ENCODE measurements at regions of chr18 and their contacts with region 1.

Region 1: GRCh38 chr18:3245853-3246634 is 1.6 kb upstream of the MYL12A start:
- DNase-seq: peak; percentile 95
- H3K4me3 ChIP-seq: peak overlapping the region; percentile 98 to 100 (median 99)
- H3K27ac ChIP-seq: peak overlapping the region; percentile 100
- H3K4me1 ChIP-seq: peaks cover 0 to 34% (median 25%) of the 10 kb centered on the region in 4 donors
- H3K27me3 ChIP-seq: no peaks in the 10 kb centered on the region
- CTCF ChIP-seq: peak; percentile 86 to 95 (median 93)
- EP300 ChIP-seq: no peak
- POLR2A ChIP-seq: no peak

Region 2: GRCh38 chr18:2932247-2933181 is 313.5 kb before region 1 on chr18:
- intact Hi-C with region 1: loop called (anchors 5 kb)
- DNase-seq: no peak
- H3K4me3 ChIP-seq: no peak overlapping the region
- H3K27ac ChIP-seq: no peak overlapping the region
- H3K4me1 ChIP-seq: peaks cover 0 to 12% (median 5%) of the 10 kb centered on the region in 4 donors
- H3K27me3 ChIP-seq: no peaks in the 10 kb centered on the region
- CTCF ChIP-seq: peak; percentile 57 to 79 (median 58)
- EP300 ChIP-seq: no peak
- POLR2A ChIP-seq: no peak

Region 3: GRCh38 chr18:2985628-2986027 is 260.4 kb before region 1 on chr18:
- intact Hi-C with region 1: no loop called
- DNase-seq: no peak
- H3K4me3 ChIP-seq: no peak overlapping the region
- H3K27ac ChIP-seq: no peak overlapping the region
- H3K4me1 ChIP-seq: peaks cover 0 to 34% (median 31%) of the 10 kb centered on the region in 4 donors
- H3K27me3 ChIP-seq: no peaks in the 10 kb centered on the region
- CTCF ChIP-seq: peak in 3 of 4 experiments; percentile 23 to 42 (median 34)
- EP300 ChIP-seq: no peak
- POLR2A ChIP-seq: no peak

Region 4: DNA sequence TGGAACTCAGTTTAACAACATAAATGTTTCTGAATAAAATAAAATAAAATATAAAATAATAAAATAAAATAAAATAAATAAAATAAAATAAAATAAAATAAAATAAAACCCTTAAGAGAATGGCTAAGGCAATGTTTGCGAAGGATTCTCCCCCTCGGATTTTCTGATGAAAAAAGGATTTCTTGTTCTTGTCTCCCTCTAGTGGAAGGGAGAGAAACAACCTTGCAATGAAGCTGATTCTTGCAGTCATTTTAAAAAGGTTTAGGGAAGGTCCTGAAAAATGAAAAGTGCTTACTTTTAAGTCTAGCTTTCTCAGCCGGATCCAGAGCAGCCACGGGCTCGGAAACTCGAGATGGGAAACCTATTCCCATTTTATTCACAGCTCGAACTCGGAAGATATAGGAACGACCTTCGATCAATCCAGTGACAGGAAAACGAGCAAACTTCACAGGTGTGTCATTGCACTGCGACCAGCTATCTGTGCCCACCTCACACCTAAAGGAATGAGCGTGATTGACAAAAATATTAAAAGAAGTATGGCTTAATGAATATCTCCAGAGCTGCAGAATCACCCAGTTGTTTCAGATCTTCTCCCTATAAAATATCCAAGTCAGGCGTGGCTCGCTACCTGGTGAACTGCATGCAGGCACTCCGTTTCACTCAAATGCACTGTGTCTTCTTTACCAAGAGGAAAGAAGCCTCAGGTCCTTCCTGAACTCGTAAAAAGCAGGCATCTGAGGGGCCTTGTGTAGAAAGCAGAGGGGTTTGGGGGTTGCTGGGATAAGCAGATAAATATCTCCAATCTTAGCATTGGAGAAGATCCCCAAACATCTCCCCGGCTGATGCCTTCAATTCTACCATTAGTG is 94.4 kb before region 1 on chr18:
- intact Hi-C with region 1: loop called (anchors 2 kb)
- DNase-seq: no peak
- H3K4me3 ChIP-seq: no peak overlapping the region
- H3K27ac ChIP-seq: no peak overlapping the region
- H3K4me1 ChIP-seq: no peaks in the 10 kb centered on the region
- H3K27me3 ChIP-seq: no peaks in the 10 kb centered on the region
- CTCF ChIP-seq: peak in 3 of 4 experiments; percentile 51 to 79 (median 54)
- EP300 ChIP-seq: no peak
- POLR2A ChIP-seq: no peak

Region 5: DNA sequence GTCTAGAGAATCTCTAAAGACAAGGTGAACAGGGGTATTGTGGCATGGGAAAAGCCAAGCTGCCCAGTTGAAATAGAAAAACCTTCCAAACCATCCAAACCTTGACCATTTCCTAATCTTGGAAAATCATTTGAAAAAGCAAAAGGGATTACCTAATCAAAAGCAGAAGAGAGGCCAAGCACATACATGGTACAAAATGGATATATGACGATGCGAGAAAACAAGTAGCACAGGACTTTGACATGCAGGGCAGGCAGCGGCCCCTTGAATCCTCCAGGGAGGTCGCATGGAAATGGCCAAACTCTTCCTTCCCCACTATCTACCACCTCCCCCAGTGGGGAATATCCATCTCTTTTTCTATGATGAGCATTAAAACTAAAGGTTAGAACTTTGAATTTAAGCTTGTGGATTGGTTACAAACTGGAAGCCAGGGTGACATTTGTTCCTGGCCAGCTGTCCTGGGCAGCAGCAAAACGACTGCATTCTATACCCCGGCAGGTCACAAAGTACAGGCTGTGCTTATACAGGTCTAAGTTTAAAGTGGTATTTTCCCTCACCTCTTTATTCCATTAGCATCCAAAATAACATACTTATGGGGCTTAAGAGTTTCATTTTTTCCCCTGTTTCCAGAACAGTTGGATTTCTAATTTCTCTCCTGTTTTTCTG is 51.0 kb before region 1 on chr18:
- intact Hi-C with region 1: loop called (anchors 5 kb)
- DNase-seq: no peak
- H3K4me3 ChIP-seq: no peak overlapping the region
- H3K27ac ChIP-seq: no peak overlapping the region
- H3K4me1 ChIP-seq: no peaks in the 10 kb centered on the region
- H3K27me3 ChIP-seq: no peaks in the 10 kb centered on the region
- CTCF ChIP-seq: no peak
- EP300 ChIP-seq: no peak
- POLR2A ChIP-seq: no peak

Measured in sigmoid colon (tissue), 7 donors.